ENCODE measurements at regions of chr17 and their contacts with region 1.

Region 1: DNA sequence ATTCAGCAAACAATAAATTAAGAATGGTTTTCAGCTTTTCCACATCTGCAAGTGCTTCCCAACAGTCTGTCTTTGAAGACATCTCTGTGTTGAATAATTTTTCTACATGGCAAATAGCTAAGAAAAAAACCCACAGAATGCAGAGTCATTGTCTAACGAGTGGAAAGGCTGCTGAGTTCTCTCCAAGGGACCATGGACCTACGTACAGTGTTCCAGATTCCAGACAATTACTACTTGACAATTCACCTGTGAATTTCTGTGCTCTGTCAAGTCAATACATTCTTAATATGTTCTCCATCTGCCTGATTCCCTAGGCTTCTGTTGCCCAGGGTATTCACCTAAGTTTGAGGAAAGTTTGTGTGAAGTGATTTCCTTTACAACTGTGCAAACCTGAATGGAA is 83.8 kb upstream of the CA10 start:
- DNase-seq: no peak
- H3K4me3 ChIP-seq: no peak overlapping the region
- H3K27ac ChIP-seq: no peak overlapping the region
- H3K4me1 ChIP-seq: no peaks in the 10 kb centered on the region
- H3K27me3 ChIP-seq: no peaks in the 10 kb centered on the region
- CTCF ChIP-seq: no peak
- EP300 ChIP-seq: no peak
- POLR2A ChIP-seq: no peak

Region 2: GRCh38 chr17:52170963-52171572 is 71.2 kb before region 1 on chr17:
- intact Hi-C with region 1: no loop called
- DNase-seq: no peak
- H3K4me3 ChIP-seq: no peak overlapping the region
- H3K27ac ChIP-seq: no peak overlapping the region
- H3K4me1 ChIP-seq: no peaks in the 10 kb centered on the region
- H3K27me3 ChIP-seq: no peaks in the 10 kb centered on the region
- CTCF ChIP-seq: no peak
- EP300 ChIP-seq: no peak
- POLR2A ChIP-seq: no peak

Region 3: GRCh38 chr17:52294301-52294700 is 52.0 kb after region 1 on chr17:
- intact Hi-C with region 1: no loop called
- DNase-seq: no peak
- H3K4me3 ChIP-seq: no peak overlapping the region
- H3K27ac ChIP-seq: no peak overlapping the region
- H3K4me1 ChIP-seq: no peaks in the 10 kb centered on the region
- H3K27me3 ChIP-seq: no peaks in the 10 kb centered on the region
- CTCF ChIP-seq: no peak
- EP300 ChIP-seq: no peak
- POLR2A ChIP-seq: no peak

Region 4: DNA sequence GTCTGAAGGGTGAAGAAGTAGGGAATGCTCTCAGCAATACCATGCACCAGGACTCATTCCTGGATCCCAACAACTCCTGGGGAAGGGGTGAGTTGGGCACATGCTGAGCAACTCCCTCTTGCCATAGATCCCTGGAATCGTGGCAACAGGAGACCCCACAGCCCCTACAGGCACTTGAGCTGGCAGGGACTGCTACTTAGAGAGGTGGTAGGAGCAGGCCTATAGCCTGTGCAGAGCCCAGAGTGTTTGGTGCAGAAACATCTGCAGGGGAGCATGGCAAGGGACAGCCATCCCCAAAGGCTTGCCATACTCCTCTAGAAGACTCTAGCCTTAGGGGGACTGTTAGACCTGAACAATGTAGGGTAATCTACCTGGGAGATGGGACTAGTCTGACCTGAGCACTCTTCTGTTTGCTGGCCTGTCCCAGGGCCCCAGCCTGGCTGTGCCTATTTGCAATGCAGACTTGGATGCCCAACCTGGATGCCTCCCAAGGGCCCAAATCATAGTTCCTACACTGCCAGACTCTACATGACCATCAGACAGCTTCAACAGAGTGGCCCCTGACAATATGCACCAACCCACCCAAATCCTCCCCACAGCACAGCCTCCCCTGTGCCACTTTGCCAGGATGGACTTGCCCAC is 1011.8 kb after region 1 on chr17:
- intact Hi-C with region 1: loop called in 1 of 4 experiments (anchors 5 kb)
- DNase-seq: no peak
- H3K4me3 ChIP-seq: no peak overlapping the region
- H3K27ac ChIP-seq: no peak overlapping the region
- H3K4me1 ChIP-seq: no peaks in the 10 kb centered on the region
- H3K27me3 ChIP-seq: no peaks in the 10 kb centered on the region
- CTCF ChIP-seq: no peak
- EP300 ChIP-seq: no peak
- POLR2A ChIP-seq: no peak

Measured in ovary (tissue), 10 donors.